CD4-positive, alpha-beta memory T cell (primary cell): ENCODE measurements at regions of chr7 and their contacts with region 1.

Region 1: GRCh38 chr7:23335621-23336020 is 36.5 kb downstream of the MALSU1 start:
- DNase-seq: no peak
- H3K4me3 ChIP-seq: no peak overlapping the region
- H3K4me3 Mint-ChIP-seq: no peak overlapping the region
- H3K27ac ChIP-seq: no peak overlapping the region
- H3K27ac Mint-ChIP-seq: no peak overlapping the region
- H3K4me1 ChIP-seq: no peaks in the 10 kb centered on the region
- H3K4me1 Mint-ChIP-seq: no peaks in the 10 kb centered on the region
- H3K27me3 ChIP-seq: no peaks in the 10 kb centered on the region
- H3K27me3 Mint-ChIP-seq: peaks cover 1 to 9% of the 10 kb centered on the region in 2 donors

Region 2: GRCh38 chr7:21443149-21443841 is 1892.3 kb before region 1 on chr7:
- CTCF ChIA-PET with region 1: no interaction called
- POLR2A ChIA-PET with region 1: no interaction called
- intact Hi-C with region 1: no loop called
- DNase-seq: no peak
- H3K4me3 ChIP-seq: no peak overlapping the region
- H3K4me3 Mint-ChIP-seq: peak overlapping the region in 1 of 8 donors; percentile 3
- H3K27ac ChIP-seq: no peak overlapping the region
- H3K27ac Mint-ChIP-seq: peak overlapping the region in 4 of 7 donors; percentile 0 to 34 (median 18)
- H3K4me1 ChIP-seq: peaks cover 22% of the 10 kb centered on the region
- H3K4me1 Mint-ChIP-seq: peaks cover 39 to 83% (median 64%) of the 10 kb centered on the region in 4 donors
- H3K27me3 ChIP-seq: no peaks in the 10 kb centered on the region
- H3K27me3 Mint-ChIP-seq: no peaks in the 10 kb centered on the region

Region 3: GRCh38 chr7:23100697-23101096 is 234.9 kb before region 1 on chr7:
- CTCF ChIA-PET with region 1: no interaction called
- POLR2A ChIA-PET with region 1: no interaction called
- intact Hi-C with region 1: no loop called
- DNase-seq: no peak
- H3K4me3 ChIP-seq: no peak overlapping the region
- H3K4me3 Mint-ChIP-seq: no peak overlapping the region
- H3K27ac ChIP-seq: no peak overlapping the region
- H3K27ac Mint-ChIP-seq: no peak overlapping the region
- H3K4me1 ChIP-seq: peaks cover 6% of the 10 kb centered on the region
- H3K4me1 Mint-ChIP-seq: peaks cover 0 to 12% (median 5%) of the 10 kb centered on the region in 4 donors
- H3K27me3 ChIP-seq: no peaks in the 10 kb centered on the region
- H3K27me3 Mint-ChIP-seq: peaks cover 2 to 6% of the 10 kb centered on the region in 2 donors

Region 4: DNA sequence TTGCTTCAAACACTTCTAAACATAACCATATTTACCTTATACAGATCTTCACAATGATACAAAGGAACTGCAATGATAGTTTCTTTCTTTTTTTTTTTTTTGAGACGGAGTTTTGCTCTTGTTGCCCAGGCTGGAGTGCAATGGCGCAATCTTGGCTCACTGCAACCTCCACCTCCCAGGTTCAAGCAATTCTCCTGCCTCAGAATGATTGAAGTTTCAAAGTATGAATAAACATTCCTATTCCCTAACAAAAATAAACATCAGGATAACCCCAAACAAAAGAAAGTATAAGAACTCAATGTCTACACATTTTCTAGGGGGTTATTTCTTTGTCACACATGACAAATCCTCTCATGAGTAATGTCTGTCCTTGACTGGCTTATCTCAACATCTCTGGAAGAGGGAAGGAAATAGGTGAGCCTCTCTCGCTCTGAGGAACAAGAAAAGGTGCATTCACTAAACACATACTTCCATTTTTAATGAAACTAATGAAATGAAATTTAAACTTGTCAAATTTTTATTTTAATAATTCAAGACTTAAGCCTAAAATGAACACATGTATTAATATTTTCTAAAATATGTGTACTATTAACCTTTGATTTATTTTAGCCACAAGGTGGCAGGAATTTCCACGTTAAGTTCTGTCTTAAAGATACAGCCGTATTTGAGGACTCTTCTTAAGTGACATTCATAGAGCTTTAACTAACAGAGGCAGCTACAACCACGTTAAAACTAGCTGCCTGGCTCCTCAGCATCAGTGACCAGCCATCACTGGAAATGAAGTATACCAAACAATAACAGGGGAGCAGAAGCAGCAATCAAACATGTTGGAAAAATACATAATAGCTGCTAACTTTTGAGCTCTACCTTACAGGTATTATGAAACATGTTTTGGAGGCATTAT is 21.8 kb after region 1 on chr7:
- CTCF ChIA-PET with region 1: interaction called, 12 read pairs
- POLR2A ChIA-PET with region 1: no interaction called
- intact Hi-C with region 1: no loop called
- DNase-seq: peak in 3 of 5 donors; percentile 4 to 12 (median 8)
- H3K4me3 ChIP-seq: no peak overlapping the region
- H3K4me3 Mint-ChIP-seq: peak overlapping the region in 2 of 8 donors; percentile 28 to 43
- H3K27ac ChIP-seq: no peak overlapping the region
- H3K27ac Mint-ChIP-seq: peak overlapping the region in 1 of 7 donors; percentile 22
- H3K4me1 ChIP-seq: peaks cover 25% of the 10 kb centered on the region
- H3K4me1 Mint-ChIP-seq: peaks cover 8 to 18% (median 9%) of the 10 kb centered on the region in 4 donors
- H3K27me3 ChIP-seq: no peaks in the 10 kb centered on the region
- H3K27me3 Mint-ChIP-seq: peaks cover 7 to 8% of the 10 kb centered on the region in 2 donors